Common myeloid progenitor, CD34-positive (primary cell): ENCODE measurements at regions of chr1 and their contacts with region 1.

Region 1: GRCh38 chr1:171501305-171502024 is 16.1 kb downstream of the PRRC2C start:
- DNase-seq: no peak
- H3K4me3 ChIP-seq: no peak overlapping the region
- H3K27ac ChIP-seq: no peak overlapping the region
- H3K4me1 ChIP-seq: peaks cover 0 to 2% (median 0%) of the 10 kb centered on the region in 4 experiments
- H3K27me3 ChIP-seq: no peaks in the 10 kb centered on the region

Region 2: GRCh38 chr1:171485375-171486047 is 16.0 kb before region 1 on chr1 and contains the start of gene PRRC2C:
- CTCF ChIA-PET with region 1: interaction called, 21 read pairs
- POLR2A ChIA-PET with region 1: no interaction called
- DNase-seq: peak; percentile 97 to 99 (median 99)
- H3K4me3 ChIP-seq: peak within 1 kb of the TSS; percentile 68 to 95 (median 91)
- H3K27ac ChIP-seq: peak within 1 kb of the TSS; percentile 100
- H3K4me1 ChIP-seq: peaks cover 16 to 34% (median 20%) of the 10 kb centered on the region in 4 experiments
- H3K27me3 ChIP-seq: no peaks in the 10 kb centered on the region